Natural killer cell (primary cell): ENCODE measurements at regions of chr5 and their contacts with region 1.

Region 1: GRCh38 chr5:141878711-141879425 is 658 bp upstream of the PCDH1 start:
- DNase-seq: peak; percentile 85 to 98
- ATAC-seq: peak; percentile 69 to 83 (median 72)
- H3K4me3 ChIP-seq: peak overlapping the region; percentile 52
- H3K4me3 Mint-ChIP-seq: peak overlapping the region; percentile 80
- H3K27ac ChIP-seq: peak overlapping the region; percentile 23
- H3K27ac Mint-ChIP-seq: peak overlapping the region; percentile 47 to 82
- H3K4me1 ChIP-seq: peaks cover 38% of the 10 kb centered on the region
- H3K4me1 Mint-ChIP-seq: peaks cover 38 to 55% of the 10 kb centered on the region in 2 donors
- H3K27me3 ChIP-seq: peaks cover 58% of the 10 kb centered on the region
- H3K27me3 Mint-ChIP-seq: peaks cover 30 to 47% of the 10 kb centered on the region in 2 donors
- CTCF ChIP-seq: peak; percentile 95

Region 2: GRCh38 chr5:141691867-141692532 is 186.9 kb before region 1 on chr5:
- intact Hi-C with region 1: loop called (anchors 2 kb)
- DNase-seq: peak; percentile 88 to 89
- ATAC-seq: peak; percentile 95 to 99 (median 99)
- H3K4me3 ChIP-seq: no peak overlapping the region
- H3K4me3 Mint-ChIP-seq: peak overlapping the region; percentile 42
- H3K27ac ChIP-seq: no peak overlapping the region
- H3K27ac Mint-ChIP-seq: peak overlapping the region in 1 of 2 donors; percentile 83
- H3K4me1 ChIP-seq: peaks cover 22% of the 10 kb centered on the region
- H3K4me1 Mint-ChIP-seq: peaks cover 13 to 15% of the 10 kb centered on the region in 2 donors
- H3K27me3 ChIP-seq: no peaks in the 10 kb centered on the region
- H3K27me3 Mint-ChIP-seq: peaks cover 3 to 11% of the 10 kb centered on the region in 2 donors
- CTCF ChIP-seq: peak; percentile 95

Region 3: GRCh38 chr5:141701360-141702119 is 177.3 kb before region 1 on chr5:
- intact Hi-C with region 1: loop called (anchors 1 kb)
- DNase-seq: no peak
- ATAC-seq: peak; percentile 4 to 26 (median 11)
- H3K4me3 ChIP-seq: no peak overlapping the region
- H3K4me3 Mint-ChIP-seq: no peak overlapping the region
- H3K27ac ChIP-seq: no peak overlapping the region
- H3K27ac Mint-ChIP-seq: peak overlapping the region in 1 of 2 donors; percentile 83
- H3K4me1 ChIP-seq: peaks cover 22% of the 10 kb centered on the region
- H3K4me1 Mint-ChIP-seq: peaks cover 7 to 18% of the 10 kb centered on the region in 2 donors
- H3K27me3 ChIP-seq: peaks cover 32% of the 10 kb centered on the region
- H3K27me3 Mint-ChIP-seq: peaks cover 39 to 47% of the 10 kb centered on the region in 2 donors
- CTCF ChIP-seq: no peak

Region 4: GRCh38 chr5:141811287-141812155 is 67.3 kb before region 1 on chr5:
- intact Hi-C with region 1: loop called (anchors 5 kb)
- DNase-seq: peak; percentile 20 to 63
- ATAC-seq: peak; percentile 61 to 89 (median 87)
- H3K4me3 ChIP-seq: no peak overlapping the region
- H3K4me3 Mint-ChIP-seq: no peak overlapping the region
- H3K27ac ChIP-seq: no peak overlapping the region
- H3K27ac Mint-ChIP-seq: no peak overlapping the region
- H3K4me1 ChIP-seq: no peaks in the 10 kb centered on the region
- H3K4me1 Mint-ChIP-seq: peaks cover 0 to 6% of the 10 kb centered on the region in 2 donors
- H3K27me3 ChIP-seq: peaks cover 9% of the 10 kb centered on the region
- H3K27me3 Mint-ChIP-seq: peaks cover 35 to 37% of the 10 kb centered on the region in 2 donors
- CTCF ChIP-seq: peak; percentile 62

Region 5: GRCh38 chr5:141849375-141850243 is 29.3 kb before region 1 on chr5:
- intact Hi-C with region 1: loop called (anchors 2 kb)
- DNase-seq: peak; percentile 60 to 84
- ATAC-seq: peak; percentile 81 to 85 (median 84)
- H3K4me3 ChIP-seq: peak overlapping the region; percentile 89
- H3K4me3 Mint-ChIP-seq: peak overlapping the region; percentile 91
- H3K27ac ChIP-seq: peak overlapping the region; percentile 78
- H3K27ac Mint-ChIP-seq: peak overlapping the region; percentile 78 to 82
- H3K4me1 ChIP-seq: peaks cover 16% of the 10 kb centered on the region
- H3K4me1 Mint-ChIP-seq: peaks cover 5 to 18% of the 10 kb centered on the region in 2 donors
- H3K27me3 ChIP-seq: no peaks in the 10 kb centered on the region
- H3K27me3 Mint-ChIP-seq: no peaks in the 10 kb centered on the region
- CTCF ChIP-seq: no peak

Region 6: DNA sequence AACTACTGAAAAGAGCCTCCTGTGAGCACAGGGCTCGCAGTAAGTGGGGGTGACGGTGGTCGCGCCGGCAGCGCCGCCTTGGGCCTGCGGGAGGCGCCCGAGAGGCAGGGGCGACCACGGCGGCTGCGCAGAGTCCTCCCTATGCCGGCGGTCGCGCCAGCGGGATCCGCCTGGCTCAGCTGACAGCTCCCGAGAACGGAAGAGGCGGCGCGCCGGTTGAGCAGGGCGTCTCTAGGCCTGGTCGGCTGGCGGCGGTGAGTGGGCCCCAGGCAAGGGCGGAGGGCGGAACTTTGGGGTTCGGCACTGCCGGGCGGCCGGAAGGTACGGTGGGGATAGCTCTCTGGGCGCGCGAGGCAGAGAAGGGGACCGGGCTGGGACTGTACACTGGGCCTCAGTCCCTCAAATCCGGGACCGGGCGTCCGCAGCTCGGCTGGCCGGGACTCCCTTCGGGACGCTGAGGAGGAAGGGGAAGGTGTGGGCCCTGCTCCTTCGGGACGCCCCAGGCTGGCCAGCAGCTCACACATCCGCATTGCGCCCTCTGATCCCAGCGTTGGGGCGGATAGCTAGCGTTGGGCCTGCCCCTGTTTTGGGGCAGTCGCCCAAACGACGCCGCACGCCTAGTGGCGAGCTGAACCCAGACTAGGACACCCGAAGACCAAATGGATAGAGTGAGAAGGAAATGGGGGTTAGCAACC is 90.2 kb after region 1 on chr5 and contains the start of gene RNF14:
- intact Hi-C with region 1: loop called (anchors 2 kb)
- DNase-seq: peak; percentile 92 to 96
- ATAC-seq: peak; percentile 94 to 97 (median 95)
- H3K4me3 ChIP-seq: peak within 1 kb of the TSS; percentile 97
- H3K4me3 Mint-ChIP-seq: peak within 1 kb of the TSS; percentile 99
- H3K27ac ChIP-seq: peak within 1 kb of the TSS; percentile 98
- H3K27ac Mint-ChIP-seq: peak within 1 kb of the TSS; percentile 96 to 98
- H3K4me1 ChIP-seq: peaks cover 12% of the 10 kb centered on the region
- H3K4me1 Mint-ChIP-seq: peaks cover 27 to 30% of the 10 kb centered on the region in 2 donors
- H3K27me3 ChIP-seq: no peaks in the 10 kb centered on the region
- H3K27me3 Mint-ChIP-seq: no peaks in the 10 kb centered on the region
- CTCF ChIP-seq: peak; percentile 97
- total RNA-seq, gene RNF14: 20.6 to 29.2 (median 21.3) TPM

Region 7: GRCh38 chr5:142012792-142013388 is 134.0 kb after region 1 on chr5 and contains the start of gene GNPDA1:
- intact Hi-C with region 1: loop called (anchors 5 kb)
- DNase-seq: peak; percentile 80 to 85
- ATAC-seq: peak; percentile 76 to 94 (median 92)
- H3K4me3 ChIP-seq: peak within 1 kb of the TSS; percentile 78
- H3K4me3 Mint-ChIP-seq: peak within 1 kb of the TSS; percentile 75
- H3K27ac ChIP-seq: peak within 1 kb of the TSS; percentile 63
- H3K27ac Mint-ChIP-seq: peak within 1 kb of the TSS; percentile 61 to 89
- H3K4me1 ChIP-seq: peaks cover 55% of the 10 kb centered on the region
- H3K4me1 Mint-ChIP-seq: peaks cover 35 to 55% of the 10 kb centered on the region in 2 donors
- H3K27me3 ChIP-seq: no peaks in the 10 kb centered on the region
- H3K27me3 Mint-ChIP-seq: no peaks in the 10 kb centered on the region
- CTCF ChIP-seq: no peak
- total RNA-seq, gene GNPDA1: 10.7 to 12.0 (median 11.2) TPM